ENCODE measurements at regions of chr1 and their contacts with region 1.

Region 1: GRCh38 chr1:41639332-41639936 is 155.0 kb upstream of the EDN2 start:
- DNase-seq: peak; percentile 84
- ATAC-seq: peak; percentile 83
- H3K4me3 Mint-ChIP-seq: peak overlapping the region; percentile 62
- H3K27ac Mint-ChIP-seq: no peak overlapping the region
- H3K4me1 Mint-ChIP-seq: peaks cover 13% of the 10 kb centered on the region
- H3K27me3 Mint-ChIP-seq: no peaks in the 10 kb centered on the region

Region 2: DNA sequence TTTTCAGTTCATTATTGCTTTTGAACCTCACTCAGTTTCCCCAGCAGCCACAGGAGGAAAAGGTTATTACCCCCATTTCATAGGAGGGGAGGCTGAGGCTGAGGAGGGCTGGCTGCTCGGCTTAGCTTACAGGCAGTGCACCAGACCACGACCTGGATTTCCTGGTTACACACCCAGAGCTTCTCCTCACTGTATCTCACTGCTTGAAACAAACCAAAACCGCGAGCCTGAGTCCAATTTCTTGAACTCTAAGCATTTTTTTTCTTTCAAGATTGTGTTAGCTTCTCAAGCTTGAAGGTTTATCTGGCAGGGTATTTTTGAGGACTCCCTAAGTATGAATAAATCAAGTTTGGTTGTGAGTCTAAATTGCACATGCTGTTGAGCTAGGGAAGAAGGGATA is 33.9 kb after region 1 on chr1:
- CTCF ChIA-PET with region 1: interaction called, 4 read pairs
- POLR2A ChIA-PET with region 1: no interaction called
- intact Hi-C with region 1: loop called in 1 of 2 experiments (anchors 1 kb)
- DNase-seq: peak; percentile 68
- ATAC-seq: peak; percentile 71
- H3K4me3 Mint-ChIP-seq: peak overlapping the region; percentile 50
- H3K27ac Mint-ChIP-seq: peak overlapping the region; percentile 80
- H3K4me1 Mint-ChIP-seq: peaks cover 91% of the 10 kb centered on the region
- H3K27me3 Mint-ChIP-seq: no peaks in the 10 kb centered on the region

Region 3: GRCh38 chr1:41751804-41752513 is 112.5 kb after region 1 on chr1:
- CTCF ChIA-PET with region 1: interaction called, 3 read pairs
- POLR2A ChIA-PET with region 1: no interaction called
- intact Hi-C with region 1: loop called in 1 of 2 experiments (anchors 1 kb)
- DNase-seq: peak; percentile 30
- ATAC-seq: peak; percentile 17
- H3K4me3 Mint-ChIP-seq: no peak overlapping the region
- H3K27ac Mint-ChIP-seq: peak overlapping the region; percentile 90
- H3K4me1 Mint-ChIP-seq: peaks cover 73% of the 10 kb centered on the region
- H3K27me3 Mint-ChIP-seq: no peaks in the 10 kb centered on the region

Region 4: GRCh38 chr1:41802532-41803501 is 163.4 kb after region 1 on chr1:
- CTCF ChIA-PET with region 1: no interaction called
- POLR2A ChIA-PET with region 1: no interaction called
- intact Hi-C with region 1: loop called in 1 of 2 experiments (anchors 2 kb)
- DNase-seq: no peak
- ATAC-seq: no peak
- H3K4me3 Mint-ChIP-seq: no peak overlapping the region
- H3K27ac Mint-ChIP-seq: peak overlapping the region; percentile 47
- H3K4me1 Mint-ChIP-seq: peaks cover 81% of the 10 kb centered on the region
- H3K27me3 Mint-ChIP-seq: no peaks in the 10 kb centered on the region

Region 5: GRCh38 chr1:41919764-41920397 is 280.4 kb after region 1 on chr1:
- CTCF ChIA-PET with region 1: interaction called, 3 read pairs
- POLR2A ChIA-PET with region 1: no interaction called
- intact Hi-C with region 1: loop called in 1 of 2 experiments (anchors 5 kb)
- DNase-seq: peak; percentile 92
- ATAC-seq: peak; percentile 92
- H3K4me3 Mint-ChIP-seq: peak overlapping the region; percentile 72
- H3K27ac Mint-ChIP-seq: peak overlapping the region; percentile 88
- H3K4me1 Mint-ChIP-seq: peaks cover 57% of the 10 kb centered on the region
- H3K27me3 Mint-ChIP-seq: no peaks in the 10 kb centered on the region

Region 6: GRCh38 chr1:41977326-41977725 is 337.9 kb after region 1 on chr1:
- CTCF ChIA-PET with region 1: no interaction called
- POLR2A ChIA-PET with region 1: no interaction called
- intact Hi-C with region 1: no loop called
- DNase-seq: no peak
- ATAC-seq: no peak
- H3K4me3 Mint-ChIP-seq: no peak overlapping the region
- H3K27ac Mint-ChIP-seq: no peak overlapping the region
- H3K4me1 Mint-ChIP-seq: peaks cover 24% of the 10 kb centered on the region
- H3K27me3 Mint-ChIP-seq: no peaks in the 10 kb centered on the region